ENCODE measurements at regions of chr14 and their contacts with region 1.

Region 1: DNA sequence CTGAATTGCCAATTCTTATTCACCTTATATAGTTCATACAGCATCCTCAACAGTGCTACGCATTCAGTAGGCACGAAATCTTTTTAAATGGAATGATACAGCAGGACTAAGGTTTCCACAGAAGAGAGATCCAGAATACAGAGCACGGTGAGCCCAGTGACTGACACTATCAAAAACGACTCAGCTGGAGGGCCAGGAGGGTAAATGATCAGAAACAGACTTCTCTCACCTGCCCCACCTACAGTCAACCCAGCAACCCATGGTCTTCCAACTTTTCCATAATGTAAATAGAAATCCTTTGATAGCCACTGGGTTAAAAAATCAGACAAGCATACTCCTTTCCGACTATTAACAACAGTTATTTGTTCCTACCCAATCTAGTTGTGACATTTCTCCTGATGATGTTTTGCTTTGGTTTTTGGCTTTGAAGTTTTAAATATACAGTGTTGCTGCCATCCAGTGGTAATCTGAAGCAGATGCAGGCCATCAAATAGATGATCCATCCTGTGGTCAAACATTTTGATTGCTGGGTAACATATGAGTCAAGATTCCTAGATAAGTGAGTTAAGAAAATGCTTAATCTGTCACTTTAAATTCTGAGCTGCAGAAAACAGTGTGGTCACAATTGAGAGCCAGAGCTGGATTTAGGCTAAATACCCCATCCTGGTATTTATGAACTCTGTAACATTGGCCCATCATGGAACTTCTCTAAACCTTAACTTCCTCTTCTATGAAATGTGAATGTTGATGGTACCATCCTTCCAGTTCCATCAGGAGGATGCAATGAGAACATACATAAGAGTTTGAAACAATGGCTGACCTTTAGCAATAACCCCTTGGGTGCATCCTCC is 42.0 kb downstream of the GPHB5 start:
- DNase-seq: no peak
- H3K4me3 ChIP-seq: no peak overlapping the region
- H3K27ac ChIP-seq: no peak overlapping the region
- H3K4me1 ChIP-seq: no peaks in the 10 kb centered on the region
- H3K27me3 ChIP-seq: no peaks in the 10 kb centered on the region
- CTCF ChIP-seq: peak; percentile 34 to 80 (median 68)
- POLR2A ChIP-seq: no peak

Region 2: GRCh38 chr14:62162998-62163589 is 1113.6 kb before region 1 on chr14:
- intact Hi-C with region 1: loop called (anchors 5 kb)
- DNase-seq: peak; percentile 10 to 13
- H3K4me3 ChIP-seq: no peak overlapping the region
- H3K27ac ChIP-seq: no peak overlapping the region
- H3K4me1 ChIP-seq: no peaks in the 10 kb centered on the region
- H3K27me3 ChIP-seq: no peaks in the 10 kb centered on the region
- CTCF ChIP-seq: peak in 5 of 6 experiments; percentile 29 to 70 (median 66)
- POLR2A ChIP-seq: no peak

Region 3: GRCh38 chr14:63134801-63135200 is 141.9 kb before region 1 on chr14:
- intact Hi-C with region 1: no loop called
- DNase-seq: no peak
- H3K4me3 ChIP-seq: no peak overlapping the region
- H3K27ac ChIP-seq: no peak overlapping the region
- H3K4me1 ChIP-seq: no peaks in the 10 kb centered on the region
- H3K27me3 ChIP-seq: no peaks in the 10 kb centered on the region
- CTCF ChIP-seq: no peak
- POLR2A ChIP-seq: no peak

Region 4: DNA sequence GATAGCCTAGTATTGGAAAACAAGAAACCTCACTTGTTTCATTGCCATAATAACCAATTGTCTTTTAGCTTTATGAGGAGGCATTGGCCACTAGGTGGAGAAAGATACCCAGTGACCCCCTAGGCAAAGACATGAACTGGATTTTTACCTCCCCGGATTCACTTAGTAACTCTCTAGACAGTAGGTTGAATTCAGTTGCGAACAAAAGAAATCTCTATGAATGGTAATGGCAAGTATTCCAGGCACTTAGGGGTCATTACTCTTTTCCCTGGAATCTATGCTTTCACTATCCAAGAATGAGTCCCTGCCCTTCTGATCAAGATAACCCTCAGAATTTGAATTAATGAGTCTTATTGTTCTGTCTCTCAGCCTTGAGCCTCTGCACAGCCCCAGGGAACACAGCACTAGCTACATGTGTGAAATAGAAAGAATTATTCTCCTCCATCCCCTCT is 101.9 kb before region 1 on chr14:
- intact Hi-C with region 1: loop called (anchors 5 kb)
- DNase-seq: no peak
- H3K4me3 ChIP-seq: no peak overlapping the region
- H3K27ac ChIP-seq: no peak overlapping the region
- H3K4me1 ChIP-seq: no peaks in the 10 kb centered on the region
- H3K27me3 ChIP-seq: no peaks in the 10 kb centered on the region
- CTCF ChIP-seq: peak in 5 of 6 experiments; percentile 23 to 41 (median 37)
- POLR2A ChIP-seq: no peak

Region 5: DNA sequence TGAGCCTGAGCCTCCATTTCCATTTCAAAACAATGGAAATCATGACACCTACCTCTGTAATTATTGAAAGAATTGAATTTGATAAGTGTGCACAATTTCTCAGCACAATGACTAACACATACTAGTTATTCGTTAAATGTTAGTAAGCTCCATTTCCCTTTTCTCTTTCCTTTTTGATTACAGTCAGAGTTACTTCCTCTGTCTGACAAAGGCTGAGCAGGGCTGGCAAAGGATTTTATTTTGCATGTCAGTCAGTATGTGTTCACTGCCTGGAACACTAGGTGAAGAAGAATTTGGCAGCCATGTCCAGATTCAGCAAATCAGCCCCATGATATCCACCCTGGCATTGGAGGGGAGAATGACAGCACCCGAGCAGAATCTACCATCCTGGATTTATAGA is 84.6 kb before region 1 on chr14:
- intact Hi-C with region 1: no loop called
- DNase-seq: no peak
- H3K4me3 ChIP-seq: no peak overlapping the region
- H3K27ac ChIP-seq: no peak overlapping the region
- H3K4me1 ChIP-seq: no peaks in the 10 kb centered on the region
- H3K27me3 ChIP-seq: no peaks in the 10 kb centered on the region
- CTCF ChIP-seq: no peak
- POLR2A ChIP-seq: no peak

Region 6: GRCh38 chr14:63454863-63455622 is 178.3 kb after region 1 on chr14:
- intact Hi-C with region 1: no loop called
- DNase-seq: peak; percentile 29 to 36
- H3K4me3 ChIP-seq: no peak overlapping the region
- H3K27ac ChIP-seq: no peak overlapping the region
- H3K4me1 ChIP-seq: peaks cover 26 to 37% of the 10 kb centered on the region in 2 donors
- H3K27me3 ChIP-seq: no peaks in the 10 kb centered on the region
- CTCF ChIP-seq: no peak
- POLR2A ChIP-seq: no peak

Measured in thyroid gland (tissue), 4 donors.